Mammary epithelial cell (primary cell): ENCODE measurements at regions of chr6 and their contacts with region 1.

Region 1: GRCh38 chr6:113632220-113632864 is 224.8 kb upstream of the MARCKS start:
- DNase-seq: peak; percentile 99
- H3K4me3 ChIP-seq: peak overlapping the region in 2 of 3 experiments; percentile 24
- H3K27ac ChIP-seq: peak overlapping the region; percentile 96
- H3K4me1 ChIP-seq: peaks cover 41% of the 10 kb centered on the region
- H3K27me3 ChIP-seq: no peaks in the 10 kb centered on the region
- CTCF ChIP-seq: no peak

Region 2: GRCh38 chr6:113122060-113122459 is 510.3 kb before region 1 on chr6:
- CTCF ChIA-PET with region 1: no interaction called
- dilution Hi-C with region 1: no loop called
- in situ Hi-C with region 1: no loop called
- intact Hi-C with region 1: loop called (anchors 1 kb)
- DNase-seq: peak; percentile 77
- H3K4me3 ChIP-seq: no peak overlapping the region
- H3K27ac ChIP-seq: no peak overlapping the region
- H3K4me1 ChIP-seq: peaks cover 24% of the 10 kb centered on the region
- H3K27me3 ChIP-seq: no peaks in the 10 kb centered on the region
- CTCF ChIP-seq: peak; percentile 43 to 54

Region 3: GRCh38 chr6:113375950-113376846 is 256.1 kb before region 1 on chr6:
- CTCF ChIA-PET with region 1: interaction called, 21 read pairs
- dilution Hi-C with region 1: no loop called
- in situ Hi-C with region 1: no loop called
- intact Hi-C with region 1: no loop called
- DNase-seq: peak; percentile 51
- H3K4me3 ChIP-seq: no peak overlapping the region
- H3K27ac ChIP-seq: peak overlapping the region; percentile 12
- H3K4me1 ChIP-seq: peaks cover 11% of the 10 kb centered on the region
- H3K27me3 ChIP-seq: no peaks in the 10 kb centered on the region
- CTCF ChIP-seq: no peak

Region 4: GRCh38 chr6:113620386-113620785 is 12.0 kb before region 1 on chr6:
- CTCF ChIA-PET with region 1: no interaction called
- dilution Hi-C with region 1: no loop called
- in situ Hi-C with region 1: no loop called
- intact Hi-C with region 1: no loop called
- DNase-seq: peak; percentile 47
- H3K4me3 ChIP-seq: no peak overlapping the region
- H3K27ac ChIP-seq: no peak overlapping the region
- H3K4me1 ChIP-seq: peaks cover 7% of the 10 kb centered on the region
- H3K27me3 ChIP-seq: no peaks in the 10 kb centered on the region
- CTCF ChIP-seq: no peak

Region 5: GRCh38 chr6:113654396-113654795 is 22.1 kb after region 1 on chr6:
- CTCF ChIA-PET with region 1: no interaction called
- dilution Hi-C with region 1: no loop called
- in situ Hi-C with region 1: no loop called
- intact Hi-C with region 1: loop called (anchors 1 kb)
- DNase-seq: peak; percentile 99
- H3K4me3 ChIP-seq: peak overlapping the region in 1 of 3 experiments; percentile 22
- H3K27ac ChIP-seq: peak overlapping the region; percentile 47
- H3K4me1 ChIP-seq: peaks cover 18% of the 10 kb centered on the region
- H3K27me3 ChIP-seq: no peaks in the 10 kb centered on the region
- CTCF ChIP-seq: no peak

Region 6: DNA sequence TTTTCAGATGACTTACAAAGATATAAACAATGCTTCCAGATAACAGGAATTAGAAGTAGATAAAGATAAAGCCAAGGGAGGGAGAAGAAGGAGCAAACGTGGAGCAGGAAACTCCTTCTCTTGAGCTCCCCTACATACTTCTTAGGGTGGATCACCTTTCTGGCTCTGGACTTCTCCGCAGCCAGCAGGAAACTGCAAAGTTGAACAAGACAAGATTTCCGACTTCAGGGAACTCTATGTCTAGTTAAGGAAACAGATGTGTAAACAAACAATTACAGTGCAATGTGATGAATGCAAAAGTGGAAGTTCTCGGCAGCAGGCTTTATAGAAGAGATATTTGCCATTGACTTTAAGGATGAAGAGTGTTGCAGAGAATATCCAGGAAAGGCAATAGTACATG is 90.8 kb after region 1 on chr6:
- CTCF ChIA-PET with region 1: no interaction called
- dilution Hi-C with region 1: no loop called
- in situ Hi-C with region 1: no loop called
- intact Hi-C with region 1: no loop called
- DNase-seq: no peak
- H3K4me3 ChIP-seq: no peak overlapping the region
- H3K27ac ChIP-seq: no peak overlapping the region
- H3K4me1 ChIP-seq: peaks cover 5% of the 10 kb centered on the region
- H3K27me3 ChIP-seq: no peaks in the 10 kb centered on the region
- CTCF ChIP-seq: no peak

Region 7: DNA sequence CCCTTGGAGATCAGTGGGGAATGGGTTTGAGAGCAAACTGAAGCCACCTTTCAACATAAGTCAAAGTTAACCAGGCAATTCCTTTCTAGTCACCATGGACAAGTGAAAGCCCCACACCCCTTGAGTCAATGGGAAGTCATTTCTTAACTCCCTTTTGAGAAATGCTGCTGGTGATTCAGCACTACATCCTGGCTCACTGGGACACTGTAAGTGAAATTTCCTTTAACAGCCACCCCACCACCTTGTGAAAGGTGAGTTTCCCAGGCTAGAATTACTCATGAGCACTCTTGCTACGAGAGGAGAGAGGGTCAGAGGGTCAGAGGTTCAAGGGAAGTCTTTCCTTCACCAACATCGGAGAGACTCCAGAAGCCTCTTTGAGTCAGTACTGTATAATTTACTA is 131.5 kb after region 1 on chr6:
- CTCF ChIA-PET with region 1: no interaction called
- dilution Hi-C with region 1: no loop called
- in situ Hi-C with region 1: no loop called
- intact Hi-C with region 1: loop called (anchors 5 kb)
- DNase-seq: peak; percentile 98
- H3K4me3 ChIP-seq: no peak overlapping the region
- H3K27ac ChIP-seq: peak overlapping the region; percentile 89
- H3K4me1 ChIP-seq: peaks cover 17% of the 10 kb centered on the region
- H3K27me3 ChIP-seq: no peaks in the 10 kb centered on the region
- CTCF ChIP-seq: no peak